ENCODE measurements at regions of chr6 and their contacts with region 1.

Region 1: DNA sequence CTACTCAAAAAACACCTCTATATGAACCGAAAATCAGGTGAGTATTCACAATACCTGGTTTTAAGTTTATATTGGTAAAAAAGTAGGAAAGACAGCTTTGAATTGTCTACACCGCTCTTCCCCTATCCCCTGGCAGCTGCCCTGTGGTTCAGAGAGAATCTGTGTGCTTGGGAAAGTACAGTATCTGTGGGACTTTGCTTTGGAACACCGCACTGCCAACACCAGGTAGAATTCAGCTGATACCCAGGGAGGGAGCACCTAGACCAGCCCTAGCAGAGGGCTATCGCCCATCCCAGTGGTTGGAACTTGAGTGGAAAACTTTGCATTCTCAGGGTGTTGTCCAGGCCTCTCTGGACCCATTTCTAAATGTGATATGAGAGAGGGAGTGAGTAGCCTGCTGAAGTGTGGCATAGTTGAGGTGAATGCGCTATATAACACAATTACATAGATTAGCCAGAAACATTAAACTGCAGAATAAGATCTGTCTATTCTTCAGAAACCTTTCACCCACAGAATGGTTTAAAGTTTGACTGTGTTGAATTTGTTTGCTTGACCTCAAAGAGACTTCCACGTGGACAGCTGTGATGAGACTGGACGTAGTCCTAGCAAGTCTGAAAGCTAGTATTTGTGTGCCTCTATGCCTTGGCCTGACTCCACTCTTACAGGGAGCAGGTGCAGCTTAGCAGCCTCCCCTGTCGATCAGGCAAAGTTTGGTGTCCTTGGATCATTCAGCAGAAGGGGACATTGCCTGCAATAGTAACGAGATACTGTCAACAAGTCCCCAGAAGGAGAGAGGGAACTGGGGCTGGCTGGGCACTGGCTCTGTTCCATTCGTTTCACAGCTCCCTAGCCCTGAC is 11.5 kb upstream of the MPC1 start:
- DNase-seq: no peak
- ATAC-seq: no peak
- H3K4me3 ChIP-seq: no peak overlapping the region
- H3K27ac ChIP-seq: no peak overlapping the region
- H3K4me1 ChIP-seq: no peaks in the 10 kb centered on the region
- H3K27me3 ChIP-seq: peaks cover 0 to 22% (median 0%) of the 10 kb centered on the region in 9 donors
- CTCF ChIP-seq: no peak
- POLR2A ChIP-seq: no peak

Region 2: GRCh38 chr6:166156942-166157341 is 237.3 kb before region 1 on chr6:
- intact Hi-C with region 1: loop called in 1 of 10 experiments (anchors 10 kb)
- DNase-seq: no peak
- ATAC-seq: no peak
- H3K4me3 ChIP-seq: no peak overlapping the region
- H3K27ac ChIP-seq: no peak overlapping the region
- H3K4me1 ChIP-seq: no peaks in the 10 kb centered on the region
- H3K27me3 ChIP-seq: peaks cover 0 to 45% (median 0%) of the 10 kb centered on the region in 9 donors
- CTCF ChIP-seq: peak in 8 of 12 donors; percentile 13 to 52 (median 40)
- POLR2A ChIP-seq: no peak

Region 3: GRCh38 chr6:166313255-166314070 is 80.8 kb before region 1 on chr6:
- intact Hi-C with region 1: loop called in 1 of 10 experiments (anchors 2 kb)
- DNase-seq: no peak
- ATAC-seq: peak in 3 of 4 donors; percentile 59 to 94 (median 86)
- H3K4me3 ChIP-seq: no peak overlapping the region
- H3K27ac ChIP-seq: no peak overlapping the region
- H3K4me1 ChIP-seq: peaks cover 0 to 3% (median under 1%) of the 10 kb centered on the region in 12 donors
- H3K27me3 ChIP-seq: peaks cover 0 to 17% (median 9%) of the 10 kb centered on the region in 9 donors
- CTCF ChIP-seq: peak; percentile 50 to 85 (median 68)
- POLR2A ChIP-seq: no peak

Region 4: DNA sequence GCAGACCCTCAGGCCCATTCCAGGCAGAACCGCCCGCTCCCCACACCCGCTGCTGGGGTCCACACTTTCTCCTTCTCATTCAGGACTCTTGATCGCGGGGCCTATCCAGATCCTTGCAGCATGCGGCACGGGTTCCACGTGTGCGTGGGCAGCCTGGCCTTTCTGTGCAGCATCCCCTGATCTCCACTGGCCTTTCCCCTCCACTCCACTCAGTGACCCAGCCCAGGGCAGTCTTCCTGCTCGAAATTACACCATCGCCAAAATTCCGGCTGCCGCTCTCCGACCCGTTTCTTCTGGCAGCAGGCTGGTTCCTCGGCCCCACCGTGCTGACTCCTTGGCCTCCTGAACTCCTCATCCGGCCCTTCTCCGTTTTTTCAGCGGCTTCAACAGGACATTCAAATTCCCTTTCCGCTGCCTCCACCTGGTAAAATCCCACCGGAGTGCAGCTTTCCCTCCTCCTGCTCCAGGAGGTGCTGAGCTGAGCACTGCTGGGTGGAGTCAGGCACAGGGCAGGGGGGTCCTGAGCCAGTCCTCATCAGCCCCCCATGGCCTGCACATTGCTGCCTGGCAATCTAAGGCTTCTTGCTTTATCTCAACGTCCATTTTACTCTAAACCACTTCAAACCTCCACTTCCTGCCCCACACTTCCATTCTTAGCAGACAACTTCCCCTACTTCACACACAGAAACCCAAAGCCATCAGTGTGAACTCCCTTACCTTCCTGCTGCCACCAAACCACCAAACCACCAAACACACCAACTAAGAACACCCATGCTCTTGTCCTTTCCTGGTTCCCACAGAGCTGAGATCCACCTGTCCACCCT is 60.9 kb before region 1 on chr6:
- intact Hi-C with region 1: loop called in 1 of 10 experiments (anchors 5 kb)
- DNase-seq: no peak
- ATAC-seq: peak in 1 of 4 donors; percentile 10
- H3K4me3 ChIP-seq: no peak overlapping the region
- H3K27ac ChIP-seq: peak overlapping the region in 1 of 12 donors; percentile 24
- H3K4me1 ChIP-seq: peaks cover 0 to 57% (median 23%) of the 10 kb centered on the region in 12 donors
- H3K27me3 ChIP-seq: no peaks in the 10 kb centered on the region
- CTCF ChIP-seq: no peak
- POLR2A ChIP-seq: no peak

Region 5: GRCh38 chr6:166936079-166936787 is 542.0 kb after region 1 on chr6:
- intact Hi-C with region 1: no loop called
- DNase-seq: peak in 1 of 5 donors; percentile 73
- ATAC-seq: peak in 1 of 4 donors; percentile 52
- H3K4me3 ChIP-seq: no peak overlapping the region
- H3K27ac ChIP-seq: no peak overlapping the region
- H3K4me1 ChIP-seq: peaks cover 0 to 5% (median 0%) of the 10 kb centered on the region in 12 donors
- H3K27me3 ChIP-seq: no peaks in the 10 kb centered on the region
- CTCF ChIP-seq: no peak
- POLR2A ChIP-seq: no peak